CD4-positive, alpha-beta memory T cell (primary cell): ENCODE measurements at regions of chr17 and their contacts with region 1.

Region 1: DNA sequence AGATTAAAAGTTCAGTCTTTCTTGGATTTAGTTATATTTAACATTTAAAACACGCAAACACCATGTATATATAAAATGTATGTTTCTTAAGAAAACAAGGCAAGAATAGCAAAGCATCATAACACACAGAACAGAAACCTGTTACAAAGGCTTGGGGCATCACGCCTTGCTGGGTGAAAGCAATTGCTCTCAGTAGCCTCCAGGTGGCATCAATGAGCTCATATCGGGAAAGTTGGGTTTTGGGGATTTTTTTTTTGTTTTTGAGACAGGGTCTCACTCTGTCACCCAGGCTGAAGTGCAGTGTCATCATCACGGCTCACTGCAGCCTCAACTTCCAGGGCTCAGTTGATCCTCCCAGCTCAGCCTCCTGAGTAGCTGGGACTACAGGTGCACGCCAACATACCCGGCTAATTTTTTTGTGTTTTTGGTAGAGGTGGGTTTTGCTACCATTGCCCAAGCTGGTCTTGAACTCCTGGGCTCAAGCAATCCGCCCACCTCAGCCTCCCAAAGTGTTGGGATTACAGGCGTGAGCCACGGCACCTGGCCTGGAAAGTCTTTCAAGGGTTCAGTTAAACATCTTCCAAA is 56.9 kb downstream of the CYB5D2 start:
- DNase-seq: peak; percentile 39 to 43 (median 43)
- H3K4me3 ChIP-seq: no peak overlapping the region
- H3K4me3 Mint-ChIP-seq: no peak overlapping the region
- H3K27ac ChIP-seq: no peak overlapping the region
- H3K27ac Mint-ChIP-seq: no peak overlapping the region
- H3K4me1 ChIP-seq: no peaks in the 10 kb centered on the region
- H3K4me1 Mint-ChIP-seq: peaks cover 0 to 5% (median 2%) of the 10 kb centered on the region in 4 donors
- H3K27me3 ChIP-seq: no peaks in the 10 kb centered on the region
- H3K27me3 Mint-ChIP-seq: no peaks in the 10 kb centered on the region

Region 2: GRCh38 chr17:4175921-4176807 is 23.7 kb before region 1 on chr17:
- CTCF ChIA-PET with region 1: interaction called, 13 read pairs
- POLR2A ChIA-PET with region 1: no interaction called
- intact Hi-C with region 1: no loop called
- DNase-seq: peak; percentile 58 to 68 (median 63)
- H3K4me3 ChIP-seq: peak overlapping the region; percentile 1 to 47
- H3K4me3 Mint-ChIP-seq: peak overlapping the region; percentile 74 to 91 (median 82)
- H3K27ac ChIP-seq: peak overlapping the region; percentile 74
- H3K27ac Mint-ChIP-seq: peak overlapping the region; percentile 86 to 99 (median 98)
- H3K4me1 ChIP-seq: peaks cover 54% of the 10 kb centered on the region
- H3K4me1 Mint-ChIP-seq: peaks cover 41 to 64% (median 46%) of the 10 kb centered on the region in 4 donors
- H3K27me3 ChIP-seq: no peaks in the 10 kb centered on the region
- H3K27me3 Mint-ChIP-seq: no peaks in the 10 kb centered on the region